Ovary (tissue), 10 donors: ENCODE measurements at regions of chr22 and their contacts with region 1.

Region 1: DNA sequence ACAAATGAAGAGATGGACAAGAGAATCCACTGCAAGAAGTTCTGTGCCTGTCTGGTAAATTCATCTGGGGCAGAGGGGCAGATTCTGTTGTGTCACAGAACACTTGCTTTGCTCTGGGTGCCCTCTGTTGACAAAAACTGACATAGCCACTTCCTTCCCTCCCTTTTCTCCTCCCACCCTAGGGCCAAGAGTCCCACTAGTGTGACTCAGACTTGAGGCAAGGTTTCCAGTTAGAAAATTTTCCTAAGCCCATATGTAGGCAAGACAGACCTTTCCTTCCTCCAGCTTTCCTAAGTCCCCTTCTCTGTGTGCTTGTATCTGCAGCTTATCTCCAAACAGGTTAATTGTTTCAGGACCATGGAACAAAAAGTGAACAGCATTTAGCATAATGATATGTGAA is 106.8 kb downstream of the RBFOX2 start:
- DNase-seq: peak in 3 of 5 donors; percentile 51 to 81 (median 51)
- H3K4me3 ChIP-seq: no peak overlapping the region
- H3K27ac ChIP-seq: peak overlapping the region in 1 of 2 donors; percentile 32
- H3K4me1 ChIP-seq: peaks cover 27% of the 10 kb centered on the region
- H3K27me3 ChIP-seq: no peaks in the 10 kb centered on the region
- CTCF ChIP-seq: peak in 2 of 3 donors; percentile 45 to 50
- EP300 ChIP-seq: no peak
- POLR2A ChIP-seq: no peak

Region 2: DNA sequence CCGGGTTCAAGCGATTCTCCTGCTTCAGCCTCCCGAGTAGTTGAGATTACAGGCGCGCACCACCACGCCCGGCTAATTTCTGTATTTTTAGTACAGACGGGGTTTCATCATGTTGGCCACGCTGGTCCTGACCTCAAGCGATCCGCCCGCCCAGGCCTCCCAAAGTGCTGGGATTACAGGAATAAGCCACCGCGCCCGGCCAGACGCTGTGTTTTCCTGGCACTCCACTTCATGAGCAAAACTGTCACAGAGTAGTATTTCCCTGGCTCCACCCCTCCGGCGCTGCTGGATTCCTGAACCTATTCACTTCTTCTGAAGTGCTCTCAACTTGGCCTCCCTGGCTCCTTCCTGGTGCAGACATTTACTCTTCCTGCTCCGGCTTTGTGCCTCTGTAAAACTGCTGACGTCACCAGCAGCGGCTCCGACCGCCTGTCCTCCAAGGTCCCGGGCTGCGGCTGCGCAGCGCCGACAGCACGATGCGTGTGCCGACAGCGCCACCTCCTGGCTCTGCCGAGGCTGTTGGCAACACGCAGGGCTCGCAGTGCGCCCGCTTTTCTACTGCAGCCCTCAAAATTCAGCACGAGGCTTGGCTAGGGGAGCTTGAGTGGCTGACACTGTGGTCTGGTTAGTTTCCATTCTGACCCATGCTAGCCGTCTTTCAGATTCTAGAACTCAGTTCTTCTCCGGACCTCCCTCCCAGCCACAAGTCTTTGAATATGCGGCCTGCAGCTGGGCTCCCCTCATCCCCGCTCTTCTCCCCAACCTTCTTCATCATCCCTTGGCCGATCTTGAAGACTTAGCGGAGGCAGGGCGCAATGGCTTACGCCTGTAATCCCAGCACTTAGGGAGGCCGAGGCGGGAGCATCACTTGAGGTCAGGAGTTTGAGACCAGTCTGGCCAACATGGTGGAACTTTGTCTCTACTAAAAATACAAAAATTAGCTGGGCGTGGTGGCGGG is 202.2 kb after region 1 on chr22:
- intact Hi-C with region 1: loop called in 1 of 4 experiments (anchors 10 kb)
- DNase-seq: peak; percentile 94 to 97 (median 95)
- H3K4me3 ChIP-seq: peak overlapping the region; percentile 33
- H3K27ac ChIP-seq: peak overlapping the region; percentile 33 to 79
- H3K4me1 ChIP-seq: no peaks in the 10 kb centered on the region
- H3K27me3 ChIP-seq: no peaks in the 10 kb centered on the region
- CTCF ChIP-seq: peak; percentile 94 to 99 (median 98)
- EP300 ChIP-seq: peak; percentile 55
- POLR2A ChIP-seq: peak; percentile 5